HAP-1 (cell line): ENCODE measurements at regions of chr2 and their contacts with region 1.

Region 1: DNA sequence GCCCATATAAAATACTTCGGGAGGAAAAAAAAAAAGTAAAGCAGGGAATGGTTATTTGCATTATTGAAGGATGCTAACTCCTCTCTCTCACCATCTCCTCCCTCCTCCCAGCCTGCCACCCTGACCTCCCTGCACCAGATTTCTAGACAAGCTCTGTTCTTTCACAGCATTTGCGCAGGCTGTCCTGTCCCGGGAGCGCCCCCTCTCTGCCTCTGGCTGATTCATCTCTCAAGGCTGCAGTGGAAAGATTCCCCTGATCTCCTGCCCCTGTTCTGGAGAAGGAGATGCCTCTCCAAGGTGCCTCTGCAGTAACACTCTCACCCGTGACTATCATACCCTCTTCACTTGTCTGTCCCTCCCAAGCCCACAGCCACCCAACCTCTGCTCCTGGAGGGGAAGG is 38.5 kb downstream of the COL4A4 start:
- DNase-seq: peak; percentile 51 to 78
- H3K4me3 ChIP-seq: no peak overlapping the region
- H3K4me1 ChIP-seq: peaks cover 14% of the 10 kb centered on the region
- H3K27me3 ChIP-seq: no peaks in the 10 kb centered on the region

Region 2: GRCh38 chr2:227370791-227371312 is 245.3 kb after region 1 on chr2:
- in situ Hi-C with region 1: loop called (anchors 25 kb)
- DNase-seq: no peak
- H3K4me3 ChIP-seq: no peak overlapping the region
- H3K4me1 ChIP-seq: no peaks in the 10 kb centered on the region
- H3K27me3 ChIP-seq: no peaks in the 10 kb centered on the region

Region 3: GRCh38 chr2:227471924-227472264 is 346.4 kb after region 1 on chr2 and contains the start of gene AGFG1:
- in situ Hi-C with region 1: loop called (anchors 25 kb)
- DNase-seq: peak; percentile 81 to 89
- H3K4me3 ChIP-seq: peak within 1 kb of the TSS; percentile 62
- H3K4me1 ChIP-seq: peaks cover 12% of the 10 kb centered on the region
- H3K27me3 ChIP-seq: no peaks in the 10 kb centered on the region

Region 4: DNA sequence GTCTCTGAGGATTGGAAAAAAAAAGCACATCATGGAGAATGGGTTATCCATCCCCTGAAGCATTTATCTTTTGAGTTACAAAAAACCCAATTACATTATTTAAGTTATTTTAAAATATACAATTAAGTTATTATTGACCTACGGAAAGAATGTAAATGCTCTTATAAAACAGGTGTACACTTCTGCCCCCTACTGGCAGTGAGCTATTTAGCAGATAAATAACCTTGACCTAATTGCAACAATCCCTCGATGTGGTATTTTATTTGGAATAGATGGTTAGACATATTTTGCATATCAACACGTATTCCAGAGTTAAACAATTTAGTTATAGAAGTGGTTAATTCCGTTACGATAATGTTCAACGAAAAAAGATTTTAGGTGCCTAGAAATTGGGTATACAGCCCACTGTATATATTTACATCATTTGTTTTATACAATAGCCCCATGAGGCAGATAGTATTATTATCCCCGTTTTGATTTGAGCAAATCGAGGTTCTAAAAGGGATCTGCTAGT is 736.8 kb after region 1 on chr2:
- in situ Hi-C with region 1: loop called (anchors 25 kb)
- DNase-seq: peak; percentile 32 to 61
- H3K4me3 ChIP-seq: no peak overlapping the region
- H3K4me1 ChIP-seq: no peaks in the 10 kb centered on the region
- H3K27me3 ChIP-seq: no peaks in the 10 kb centered on the region